ENCODE measurements at regions of chr7 and their contacts with region 1.

Region 1: DNA sequence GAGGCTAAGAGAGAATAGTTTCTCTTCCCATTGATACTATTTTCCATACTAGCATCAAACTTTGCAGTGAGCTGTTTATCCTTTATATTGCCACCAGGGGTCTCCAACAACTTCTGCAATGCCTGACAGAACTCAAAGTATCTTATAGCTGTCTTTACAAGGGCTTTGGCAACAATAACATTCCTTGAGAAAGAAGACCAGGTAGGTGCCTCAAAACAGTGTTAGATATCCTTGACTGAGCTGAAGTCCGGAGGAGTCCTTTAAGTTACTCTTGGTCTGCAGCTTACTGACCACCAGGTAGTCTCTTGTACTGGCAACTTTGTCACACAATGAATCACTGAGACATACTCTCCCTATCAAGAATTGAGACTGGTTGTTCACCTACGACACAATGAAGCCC is 30.0 kb upstream of the TES start:
- DNase-seq: peak; percentile 59
- CTCF ChIP-seq: peak; percentile 70

Region 2: DNA sequence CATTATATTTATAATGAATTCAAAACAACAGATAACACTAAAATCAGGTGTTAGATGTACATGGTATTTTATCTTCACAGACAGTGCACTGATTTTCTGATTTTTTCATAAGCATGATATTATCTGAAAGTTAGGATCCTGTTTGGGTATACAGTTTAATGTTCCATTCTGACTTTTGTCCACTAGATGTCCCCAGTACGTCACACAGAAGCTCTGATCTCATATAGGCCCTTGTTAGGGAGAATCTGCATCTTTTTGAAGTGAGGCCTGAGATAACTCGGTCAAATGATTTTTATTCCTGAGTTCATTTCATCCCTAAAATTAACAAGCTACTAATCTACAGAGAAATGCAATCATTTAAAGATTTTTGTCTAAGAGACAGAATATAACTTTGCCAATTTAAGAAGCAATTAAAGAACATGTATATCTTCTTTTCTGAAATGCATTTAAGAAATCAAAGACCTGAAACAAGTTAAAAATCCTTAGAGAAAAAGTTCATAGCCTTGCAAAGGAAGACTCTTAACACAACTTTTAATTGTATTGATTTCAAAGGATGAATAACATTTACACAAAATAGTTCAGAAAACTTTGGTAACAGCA is 42.0 kb before region 1 on chr7:
- CTCF ChIA-PET with region 1: interaction called, 13 read pairs
- POLR2A ChIA-PET with region 1: no interaction called
- DNase-seq: peak; percentile 37
- CTCF ChIP-seq: peak; percentile 69

Region 3: DNA sequence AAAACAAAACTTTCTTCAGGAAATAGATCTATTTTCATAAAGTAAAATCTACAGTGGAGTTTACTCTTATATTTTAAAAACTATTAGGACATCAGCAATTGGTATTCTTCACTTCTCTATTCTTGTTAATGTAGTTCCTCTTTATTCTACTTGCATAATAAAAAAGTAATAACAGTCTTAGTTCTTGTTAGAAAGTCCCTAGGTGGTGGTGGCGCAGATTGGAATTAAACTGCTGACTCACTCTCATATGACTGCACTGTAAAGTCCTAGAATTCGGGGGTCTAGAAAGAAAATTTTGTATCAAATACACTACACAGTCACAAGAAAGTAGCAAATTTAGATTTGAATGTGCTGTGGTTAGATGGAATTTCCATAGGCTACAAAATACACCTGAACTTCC is 14.6 kb before region 1 on chr7:
- CTCF ChIA-PET with region 1: interaction called, 41 read pairs
- POLR2A ChIA-PET with region 1: no interaction called
- DNase-seq: peak; percentile 29
- CTCF ChIP-seq: no peak

Region 4: GRCh38 chr7:116197360-116197759 is 17.1 kb after region 1 on chr7:
- CTCF ChIA-PET with region 1: interaction called, 15 read pairs
- POLR2A ChIA-PET with region 1: no interaction called
- DNase-seq: no peak
- CTCF ChIP-seq: no peak

Region 5: GRCh38 chr7:116206141-116206540 is 25.8 kb after region 1 on chr7:
- CTCF ChIA-PET with region 1: interaction called, 15 read pairs
- POLR2A ChIA-PET with region 1: no interaction called
- DNase-seq: no peak
- CTCF ChIP-seq: no peak

Region 6: GRCh38 chr7:116218051-116218645 is 37.8 kb after region 1 on chr7:
- CTCF ChIA-PET with region 1: interaction called, 12 read pairs
- POLR2A ChIA-PET with region 1: no interaction called
- DNase-seq: no peak
- CTCF ChIP-seq: no peak

Region 7: DNA sequence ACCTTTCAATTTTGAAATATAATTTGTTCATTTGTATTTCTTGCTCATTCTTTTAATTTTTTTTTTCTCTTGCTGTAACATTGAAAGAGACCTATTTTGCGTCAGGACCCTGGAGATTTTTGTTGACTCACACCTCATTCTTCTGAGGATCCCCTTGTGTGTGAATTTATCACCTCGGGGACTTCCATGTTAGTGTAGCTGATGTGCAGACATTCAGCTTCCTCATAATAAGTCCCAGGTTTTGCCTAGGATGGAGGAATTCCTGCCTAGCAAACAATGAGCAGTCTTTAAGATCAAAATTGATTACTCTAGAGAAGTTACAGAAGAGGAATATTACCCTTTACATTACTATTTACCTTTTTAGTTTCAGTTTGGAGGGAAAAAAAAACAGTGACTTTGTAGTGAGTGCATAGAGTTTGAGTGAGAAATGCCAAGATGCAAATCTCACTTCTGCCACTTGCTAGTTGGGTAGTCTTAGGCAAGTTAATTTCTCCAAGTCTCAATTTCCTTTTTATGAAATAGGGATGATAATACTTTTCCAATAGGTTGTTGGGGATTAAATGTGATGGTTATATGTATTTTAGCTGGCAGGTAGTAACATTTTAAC is 44.3 kb after region 1 on chr7:
- CTCF ChIA-PET with region 1: interaction called, 345 read pairs
- POLR2A ChIA-PET with region 1: no interaction called
- DNase-seq: no peak
- CTCF ChIP-seq: no peak